Esophagus squamous epithelium (tissue), 5 donors: ENCODE measurements at regions of chr1 and their contacts with region 1.

Region 1: DNA sequence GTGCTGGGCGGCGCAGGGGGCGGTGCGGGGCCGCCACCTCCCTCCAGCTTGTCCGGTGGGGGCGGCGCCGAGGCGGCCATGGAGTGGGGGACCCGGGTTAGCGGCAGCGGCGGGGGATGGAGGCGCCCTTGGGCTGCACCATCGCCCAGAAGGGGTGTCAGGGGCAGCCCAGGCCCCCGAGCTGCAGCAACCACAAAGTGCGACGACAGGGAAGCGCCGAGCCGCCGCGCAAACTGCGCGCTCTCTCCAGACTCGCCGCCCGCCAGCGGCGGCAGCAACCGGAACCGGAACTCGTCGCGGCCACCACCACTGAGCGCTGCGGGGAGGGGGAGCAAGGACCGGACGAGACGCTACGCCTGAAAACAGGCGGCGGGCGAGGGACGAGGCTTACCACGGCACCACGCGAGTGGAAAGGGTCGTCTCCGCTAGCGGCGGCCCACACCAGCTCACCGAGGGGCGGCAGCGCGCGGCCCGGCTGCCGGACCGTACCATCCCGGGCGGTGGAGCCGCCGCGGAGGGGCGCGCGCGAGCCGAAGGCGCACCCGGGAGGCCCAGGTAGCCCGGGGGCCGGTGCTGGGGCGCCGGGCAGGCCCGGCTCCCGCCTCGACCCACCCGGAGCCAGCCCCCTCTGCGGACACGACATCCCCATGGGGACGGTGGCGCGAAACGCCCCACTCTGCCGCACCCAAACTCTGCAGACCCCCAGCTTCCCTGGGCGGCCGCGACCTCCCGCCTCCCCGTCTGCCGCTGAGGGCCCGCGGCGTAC is at the start of gene PYGO2:
- DNase-seq: no peak
- H3K4me3 ChIP-seq: peak within 1 kb of the TSS; percentile 67 to 98 (median 79)
- H3K27ac ChIP-seq: peak within 1 kb of the TSS; percentile 95 to 99 (median 98)
- H3K4me1 ChIP-seq: peaks cover 19 to 66% (median 29%) of the 10 kb centered on the region in 3 donors
- H3K27me3 ChIP-seq: no peaks in the 10 kb centered on the region
- CTCF ChIP-seq: peak; percentile 26 to 89 (median 70)
- POLR2A ChIP-seq: peak in 2 of 4 donors; percentile 68 to 89
- total RNA-seq, gene PYGO2: 14.4 to 18.8 (median 17.5) TPM

Region 2: DNA sequence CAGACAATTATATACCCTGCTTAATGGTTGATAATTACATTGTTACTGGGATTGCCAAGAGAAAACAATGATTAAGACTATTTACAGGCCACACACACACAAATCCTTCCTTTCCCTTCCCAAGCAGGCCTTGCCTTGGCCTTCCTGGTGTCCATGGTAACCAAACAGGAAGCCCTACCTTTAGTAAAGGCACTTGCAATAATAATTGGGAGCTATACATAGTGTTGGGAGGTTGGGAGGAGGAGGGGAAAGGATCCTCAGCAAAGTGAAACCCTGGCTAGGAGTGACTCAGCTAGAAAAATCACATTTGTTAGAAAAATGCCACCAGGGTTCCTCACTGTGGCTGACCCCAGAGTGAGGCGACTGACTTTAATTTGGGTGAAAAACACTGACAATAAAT is 231.4 kb before region 1 on chr1:
- intact Hi-C with region 1: no loop called
- DNase-seq: no peak
- H3K4me3 ChIP-seq: no peak overlapping the region
- H3K27ac ChIP-seq: peak overlapping the region in 3 of 4 donors; percentile 28 to 74 (median 67)
- H3K4me1 ChIP-seq: peaks cover 3 to 57% (median 21%) of the 10 kb centered on the region in 3 donors
- H3K27me3 ChIP-seq: peaks cover 0 to 18% (median 0%) of the 10 kb centered on the region in 4 donors
- CTCF ChIP-seq: no peak
- POLR2A ChIP-seq: no peak

Region 3: DNA sequence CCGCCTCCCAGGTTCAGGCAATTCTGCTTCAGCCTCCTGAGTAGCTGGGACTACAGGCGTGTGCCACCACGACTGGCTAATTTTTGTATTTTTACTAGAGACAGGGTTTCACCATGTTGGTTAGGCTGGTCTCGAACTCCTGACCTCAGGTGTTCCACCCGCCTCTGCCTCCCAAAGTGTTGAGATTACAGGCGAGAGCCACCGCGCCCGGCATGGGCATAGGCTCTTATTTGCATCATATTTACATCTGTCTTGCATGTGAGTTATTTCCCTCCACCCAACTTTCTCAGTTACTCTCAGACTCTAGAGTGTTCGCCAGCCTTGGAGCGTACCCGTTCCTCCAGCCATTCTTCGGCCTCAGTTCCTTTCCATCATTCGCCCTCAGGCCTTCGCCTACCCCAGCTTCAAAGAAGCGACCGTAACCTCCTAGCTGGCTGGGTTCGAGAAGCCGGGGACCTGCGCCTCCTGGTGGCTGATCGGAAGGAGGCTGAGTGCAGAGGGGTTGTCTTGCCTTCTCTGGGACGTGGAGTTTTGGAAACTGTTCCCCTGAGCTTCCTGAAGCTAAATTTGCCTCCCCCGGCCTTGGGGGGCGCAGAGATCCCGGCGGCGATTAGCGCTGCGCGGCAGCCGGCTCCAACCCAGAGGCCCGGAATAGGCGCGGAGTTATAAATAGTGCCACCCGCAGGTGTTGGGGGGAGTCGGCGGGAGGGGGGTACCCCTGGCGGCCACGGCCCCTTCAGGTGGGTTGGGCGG is 37.3 kb after region 1 on chr1:
- intact Hi-C with region 1: loop called (anchors 5 kb)
- DNase-seq: no peak
- H3K4me3 ChIP-seq: peak overlapping the region; percentile 77 to 96 (median 86)
- H3K27ac ChIP-seq: peak overlapping the region; percentile 97 to 99 (median 98)
- H3K4me1 ChIP-seq: peaks cover 18 to 48% (median 25%) of the 10 kb centered on the region in 3 donors
- H3K27me3 ChIP-seq: no peaks in the 10 kb centered on the region
- CTCF ChIP-seq: peak; percentile 69 to 91 (median 84)
- POLR2A ChIP-seq: no peak

Region 4: DNA sequence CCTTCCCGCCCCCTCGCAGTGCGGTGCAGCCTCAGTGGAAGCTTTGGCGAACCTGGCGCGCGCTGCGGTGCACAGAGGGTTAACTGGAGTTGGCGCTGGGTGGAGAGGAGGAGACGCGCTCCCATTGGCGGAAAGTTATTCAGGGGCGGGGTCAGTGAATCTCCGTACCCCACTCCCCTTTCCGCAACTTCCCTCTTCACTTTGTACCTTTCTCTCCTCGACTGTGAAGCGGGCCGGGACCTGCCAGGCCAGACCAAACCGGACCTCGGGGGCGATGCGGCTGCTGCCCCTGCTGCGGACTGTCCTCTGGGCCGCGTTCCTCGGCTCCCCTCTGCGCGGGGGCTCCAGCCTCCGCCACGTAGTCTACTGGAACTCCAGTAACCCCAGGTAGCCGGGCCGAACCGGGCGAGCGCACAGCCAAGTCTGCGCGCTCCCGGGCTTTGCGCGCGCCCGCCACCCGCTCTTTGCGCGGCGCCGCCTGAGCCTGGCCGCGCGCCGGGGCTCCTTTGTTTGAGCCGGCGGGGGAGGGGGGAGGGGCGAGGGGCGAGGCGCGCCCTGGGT is 102.0 kb after region 1 on chr1 and contains the start of gene EFNA4:
- intact Hi-C with region 1: loop called (anchors 10 kb)
- DNase-seq: peak; percentile 49
- H3K4me3 ChIP-seq: peak within 1 kb of the TSS; percentile 46 to 93 (median 73)
- H3K27ac ChIP-seq: peak within 1 kb of the TSS; percentile 84 to 92 (median 91)
- H3K4me1 ChIP-seq: peaks cover 31 to 48% (median 33%) of the 10 kb centered on the region in 3 donors
- H3K27me3 ChIP-seq: no peaks in the 10 kb centered on the region
- CTCF ChIP-seq: no peak
- POLR2A ChIP-seq: peak in 2 of 4 donors; percentile 59 to 68
- total RNA-seq, gene EFNA4: 8.1 to 22.9 (median 12.2) TPM